Caco-2 (cell line): ENCODE measurements at regions of chr15 and their contacts with region 1.

Region 1: DNA sequence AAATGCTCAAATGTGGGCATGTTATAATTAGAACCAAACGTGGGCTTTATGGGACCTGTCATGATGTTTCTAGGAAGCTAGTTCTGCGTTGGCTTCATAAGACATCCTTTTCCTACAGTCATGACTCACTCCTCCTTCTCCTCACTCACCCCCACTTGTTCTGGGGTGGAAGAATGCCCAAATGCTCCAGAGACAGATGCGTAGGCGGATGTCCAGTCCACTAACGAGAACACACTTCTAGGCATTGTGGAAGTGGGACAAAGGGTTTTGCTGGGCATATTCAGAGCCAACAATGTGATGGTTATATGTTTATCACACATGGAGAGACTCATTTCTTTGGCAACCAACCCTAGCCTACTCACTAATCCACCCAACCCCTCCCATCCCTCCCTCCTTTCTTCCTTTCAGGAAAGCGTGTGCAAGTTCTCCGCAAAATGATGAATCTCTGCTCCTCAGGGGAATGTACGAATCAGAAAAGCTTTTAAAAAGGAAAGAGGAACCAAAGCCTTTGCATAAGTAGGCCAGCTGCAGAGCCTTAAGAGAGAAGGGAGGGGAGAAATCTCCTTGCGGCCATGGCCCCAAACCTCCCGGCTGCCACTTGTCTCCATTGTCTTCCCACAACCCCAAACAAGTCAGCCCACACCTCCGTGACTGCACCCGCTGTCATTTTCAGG is 123.0 kb upstream of the SPRED1 start:
- DNase-seq: no peak
- H3K4me3 ChIP-seq: no peak overlapping the region
- H3K4me3 Mint-ChIP-seq: no peak overlapping the region
- H3K27ac Mint-ChIP-seq: no peak overlapping the region
- H3K4me1 ChIP-seq: peaks cover 13% of the 10 kb centered on the region
- H3K4me1 Mint-ChIP-seq: peaks cover 14% of the 10 kb centered on the region
- H3K27me3 ChIP-seq: no peaks in the 10 kb centered on the region
- H3K27me3 Mint-ChIP-seq: peaks cover 4% of the 10 kb centered on the region
- CTCF ChIP-seq: no peak

Region 2: GRCh38 chr15:38072348-38073177 is 57.1 kb before region 1 on chr15:
- CTCF ChIA-PET with region 1: no interaction called
- POLR2A ChIA-PET with region 1: interaction called, 3 read pairs
- intact Hi-C with region 1: loop called (anchors 2 kb)
- DNase-seq: peak; percentile 81 to 83
- H3K4me3 ChIP-seq: peak overlapping the region; percentile 51
- H3K4me3 Mint-ChIP-seq: peak overlapping the region; percentile 81
- H3K27ac Mint-ChIP-seq: peak overlapping the region; percentile 93
- H3K4me1 ChIP-seq: peaks cover 33% of the 10 kb centered on the region; the same call in 1 of the 2 replicates
- H3K4me1 Mint-ChIP-seq: peaks cover 15% of the 10 kb centered on the region
- H3K27me3 ChIP-seq: no peaks in the 10 kb centered on the region
- H3K27me3 Mint-ChIP-seq: no peaks in the 10 kb centered on the region
- CTCF ChIP-seq: no peak

Region 3: DNA sequence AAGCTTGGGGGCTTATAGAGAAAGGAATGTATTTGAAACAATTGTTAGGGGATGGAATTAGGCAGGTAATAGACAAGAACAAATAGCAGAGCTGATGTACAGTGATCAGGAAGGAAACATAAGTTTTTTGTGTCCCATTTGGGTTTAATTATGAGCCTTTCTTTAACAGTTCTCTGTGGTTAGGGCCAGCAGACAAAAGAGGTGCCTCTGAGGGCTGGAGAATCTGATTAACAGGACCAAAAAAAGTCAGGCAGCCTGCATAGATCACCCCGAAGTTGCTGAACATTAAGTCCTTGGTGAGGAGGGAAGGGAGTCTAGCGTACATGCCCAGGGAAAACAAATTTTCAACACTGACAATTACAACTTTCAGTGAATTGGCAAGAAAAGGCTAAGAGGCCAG is 34.4 kb after region 1 on chr15:
- CTCF ChIA-PET with region 1: no interaction called
- POLR2A ChIA-PET with region 1: no interaction called
- intact Hi-C with region 1: loop called (anchors 2 kb)
- DNase-seq: no peak
- H3K4me3 ChIP-seq: no peak overlapping the region
- H3K4me3 Mint-ChIP-seq: peak overlapping the region; percentile 66
- H3K27ac Mint-ChIP-seq: peak overlapping the region; percentile 78
- H3K4me1 ChIP-seq: peaks cover 41% of the 10 kb centered on the region
- H3K4me1 Mint-ChIP-seq: peaks cover 32% of the 10 kb centered on the region
- H3K27me3 ChIP-seq: no peaks in the 10 kb centered on the region
- H3K27me3 Mint-ChIP-seq: no peaks in the 10 kb centered on the region
- CTCF ChIP-seq: no peak

Region 4: DNA sequence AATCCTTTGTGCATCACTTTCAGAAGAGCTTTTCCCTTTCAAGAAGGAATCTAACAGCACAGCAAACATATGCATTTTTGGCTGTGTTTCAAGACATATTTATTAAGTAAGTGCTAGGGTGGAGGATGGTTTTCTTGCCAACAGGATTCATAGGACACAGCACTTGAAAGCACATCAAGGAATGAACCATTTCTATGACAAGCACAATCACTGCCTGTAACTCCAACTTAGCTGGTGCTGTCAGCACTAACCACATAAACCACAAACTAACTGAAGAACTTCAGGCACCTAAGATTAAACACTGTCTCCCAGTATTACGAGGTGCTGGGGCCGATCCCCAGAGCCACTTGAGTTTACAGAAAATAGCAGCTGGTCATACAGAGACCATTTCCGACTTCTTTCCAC is 87.5 kb after region 1 on chr15:
- CTCF ChIA-PET with region 1: no interaction called
- POLR2A ChIA-PET with region 1: no interaction called
- intact Hi-C with region 1: loop called (anchors 10 kb)
- DNase-seq: no peak
- H3K4me3 ChIP-seq: no peak overlapping the region
- H3K4me3 Mint-ChIP-seq: no peak overlapping the region
- H3K27ac Mint-ChIP-seq: peak overlapping the region; percentile 54
- H3K4me1 ChIP-seq: peaks cover 50% of the 10 kb centered on the region
- H3K4me1 Mint-ChIP-seq: peaks cover 24% of the 10 kb centered on the region
- H3K27me3 ChIP-seq: no peaks in the 10 kb centered on the region
- H3K27me3 Mint-ChIP-seq: no peaks in the 10 kb centered on the region
- CTCF ChIP-seq: no peak